AG04449 (cell line): ENCODE measurements at regions of chr11 and their contacts with region 1.

Region 1: DNA sequence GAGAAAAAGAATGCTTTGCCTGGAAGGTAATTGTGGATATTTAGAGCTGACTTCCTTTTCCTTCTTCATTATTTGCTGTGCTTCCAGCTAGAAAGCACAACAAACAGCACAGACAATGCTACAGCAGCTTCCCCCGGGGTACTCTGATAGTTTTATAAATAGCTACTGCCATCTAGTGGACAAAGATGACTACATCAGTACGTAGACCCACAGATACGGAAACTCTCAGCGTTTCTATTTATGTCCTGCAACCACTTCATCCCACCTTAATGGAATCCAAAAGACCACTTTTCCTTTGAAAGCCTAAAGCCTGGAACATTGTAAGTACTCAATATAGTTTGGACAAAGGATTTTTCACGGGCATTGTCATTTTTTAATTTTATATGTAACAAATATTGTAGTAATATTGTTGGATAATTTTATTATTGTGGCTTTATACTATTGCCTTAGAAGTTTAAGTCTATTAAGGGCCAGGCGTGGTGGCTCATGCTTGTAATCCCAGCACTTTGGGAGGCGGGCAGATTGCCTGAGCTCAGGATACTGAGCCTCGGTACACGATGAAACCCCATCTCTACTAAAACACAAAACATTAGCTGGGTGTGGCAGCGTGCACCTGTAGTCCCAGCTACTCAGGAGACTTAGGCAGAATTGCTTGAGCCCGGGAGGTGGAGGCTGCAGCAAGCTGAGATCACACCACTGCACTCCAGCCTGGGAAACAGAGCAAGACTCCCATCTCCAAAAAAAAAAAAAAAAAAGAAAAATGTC is 7.5 kb downstream of the HSPA8 start:
- DNase-seq: no peak
- H3K4me3 ChIP-seq: no peak overlapping the region
- CTCF ChIP-seq: peak; percentile 58

Region 2: GRCh38 chr11:122354025-122354697 is 700.3 kb before region 1 on chr11:
- CTCF ChIA-PET with region 1: no interaction called
- POLR2A ChIA-PET with region 1: no interaction called
- DNase-seq: no peak
- H3K4me3 ChIP-seq: no peak overlapping the region
- CTCF ChIP-seq: no peak

Region 3: GRCh38 chr11:122863704-122864326 is 190.7 kb before region 1 on chr11:
- CTCF ChIA-PET with region 1: interaction called, 60 read pairs
- POLR2A ChIA-PET with region 1: interaction called, 3 read pairs
- DNase-seq: no peak
- H3K4me3 ChIP-seq: no peak overlapping the region
- CTCF ChIP-seq: peak; percentile 61

Region 4: GRCh38 chr11:122882857-122883645 is 171.4 kb before region 1 on chr11:
- CTCF ChIA-PET with region 1: interaction called, 11 read pairs
- POLR2A ChIA-PET with region 1: no interaction called
- DNase-seq: no peak
- H3K4me3 ChIP-seq: peak overlapping the region; percentile 65
- CTCF ChIP-seq: no peak

Region 5: GRCh38 chr11:122917311-122917710 is 137.2 kb before region 1 on chr11:
- CTCF ChIA-PET with region 1: no interaction called
- POLR2A ChIA-PET with region 1: no interaction called
- DNase-seq: no peak
- H3K4me3 ChIP-seq: no peak overlapping the region
- CTCF ChIP-seq: no peak

Region 6: GRCh38 chr11:123033895-123034294 is 20.6 kb before region 1 on chr11:
- CTCF ChIA-PET with region 1: interaction called, 19 read pairs
- POLR2A ChIA-PET with region 1: interaction called, 4 read pairs
- DNase-seq: no peak
- H3K4me3 ChIP-seq: no peak overlapping the region
- CTCF ChIP-seq: no peak

Region 7: GRCh38 chr11:123039605-123040432 is 14.7 kb before region 1 on chr11:
- CTCF ChIA-PET with region 1: interaction called, 39 read pairs
- POLR2A ChIA-PET with region 1: interaction called, 9 read pairs
- DNase-seq: no peak
- H3K4me3 ChIP-seq: no peak overlapping the region
- CTCF ChIP-seq: no peak